Pancreas (tissue), 10 donors: ENCODE measurements at regions of chr4 and their contacts with region 1.

Region 1: GRCh38 chr4:168361365-168362024 is 42.9 kb upstream of the DDX60 start:
- DNase-seq: no peak
- ATAC-seq: no peak
- H3K4me3 ChIP-seq: no peak overlapping the region
- H3K27ac ChIP-seq: no peak overlapping the region
- H3K4me1 ChIP-seq: no peaks in the 10 kb centered on the region
- H3K27me3 ChIP-seq: no peaks in the 10 kb centered on the region
- CTCF ChIP-seq: no peak

Region 2: DNA sequence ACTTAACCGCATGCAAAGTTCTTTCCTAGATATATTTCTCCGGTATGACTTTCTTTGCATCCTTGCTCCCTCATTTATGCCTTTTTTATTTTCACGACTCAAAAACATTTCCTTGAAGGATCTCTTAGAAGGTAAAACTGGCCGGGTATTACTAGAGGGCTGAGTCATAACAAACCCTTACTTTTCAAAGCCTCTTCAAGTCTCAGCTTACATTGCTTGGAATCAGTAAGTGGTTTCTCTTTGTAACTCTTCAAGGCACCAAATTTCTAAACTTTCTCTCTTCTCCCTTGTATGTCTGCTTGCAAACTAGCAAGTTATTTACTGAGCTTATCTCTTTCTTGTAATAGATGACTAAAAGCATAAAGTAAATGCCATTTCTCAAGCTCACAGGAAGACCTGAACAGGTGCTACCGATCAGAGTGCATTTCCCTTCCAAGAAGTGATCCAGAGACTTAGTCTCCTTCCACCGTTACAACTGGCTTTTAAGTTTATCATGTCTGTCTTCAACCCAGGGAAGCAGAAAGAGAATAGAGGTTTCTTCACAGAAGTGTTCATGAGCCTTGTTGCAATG is 193.7 kb before region 1 on chr4:
- intact Hi-C with region 1: no loop called
- DNase-seq: no peak
- ATAC-seq: peak; percentile 40 to 68 (median 64)
- H3K4me3 ChIP-seq: peak overlapping the region in 2 of 4 donors; percentile 2 to 24
- H3K27ac ChIP-seq: peak overlapping the region; percentile 1 to 52 (median 30)
- H3K4me1 ChIP-seq: peaks cover 4 to 33% (median 30%) of the 10 kb centered on the region in 3 donors
- H3K27me3 ChIP-seq: no peaks in the 10 kb centered on the region
- CTCF ChIP-seq: no peak

Region 3: GRCh38 chr4:168569066-168569970 is 207.8 kb after region 1 on chr4:
- intact Hi-C with region 1: loop called in 1 of 3 experiments (anchors 5 kb)
- DNase-seq: peak in 3 of 6 donors; percentile 29 to 43 (median 31)
- ATAC-seq: peak; percentile 87 to 98 (median 96)
- H3K4me3 ChIP-seq: no peak overlapping the region
- H3K27ac ChIP-seq: no peak overlapping the region
- H3K4me1 ChIP-seq: peaks cover 0 to 2% (median 0%) of the 10 kb centered on the region in 3 donors
- H3K27me3 ChIP-seq: peaks cover 0 to 4% (median 0%) of the 10 kb centered on the region in 4 donors
- CTCF ChIP-seq: no peak

Region 4: DNA sequence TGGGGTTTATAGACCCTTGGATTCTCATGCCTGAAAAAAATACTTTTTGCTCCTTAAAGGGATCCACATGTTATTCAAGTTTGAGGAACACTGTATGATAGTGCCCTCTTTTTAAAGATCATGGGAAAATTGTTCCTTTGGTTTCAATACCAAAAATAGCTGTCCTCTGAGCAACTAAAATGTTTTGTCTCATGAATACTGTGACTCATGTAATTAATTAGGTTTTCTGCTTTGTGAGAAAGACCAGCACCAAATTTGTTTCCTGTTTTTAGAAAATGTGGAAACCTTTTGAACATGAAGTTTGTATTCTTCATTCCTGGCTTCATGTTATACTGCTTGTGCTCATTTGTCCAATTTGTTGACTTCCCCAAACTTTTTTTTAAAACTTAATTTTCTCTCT is 1036.8 kb after region 1 on chr4:
- intact Hi-C with region 1: no loop called
- DNase-seq: no peak
- ATAC-seq: peak in 1 of 4 donors; percentile 66
- H3K4me3 ChIP-seq: no peak overlapping the region
- H3K27ac ChIP-seq: peak overlapping the region in 1 of 4 donors; percentile 10
- H3K4me1 ChIP-seq: no peaks in the 10 kb centered on the region
- H3K27me3 ChIP-seq: no peaks in the 10 kb centered on the region
- CTCF ChIP-seq: no peak